ENCODE measurements at regions of chr3 and their contacts with region 1.

Region 1: GRCh38 chr3:119604878-119605277 is 7.2 kb downstream of the PLA1A start:
- DNase-seq: no peak
- ATAC-seq: no peak
- H3K4me3 ChIP-seq: no peak overlapping the region
- H3K27ac ChIP-seq: no peak overlapping the region
- H3K4me1 ChIP-seq: no peaks in the 10 kb centered on the region
- H3K27me3 ChIP-seq: peaks cover 8% of the 10 kb centered on the region
- CTCF ChIP-seq: no peak

Region 2: GRCh38 chr3:119624002-119624720 is 19.3 kb after region 1 on chr3:
- CTCF ChIA-PET with region 1: no interaction called
- POLR2A ChIA-PET with region 1: interaction called, 19 read pairs
- in situ Hi-C with region 1: no loop called
- intact Hi-C with region 1: no loop called
- DNase-seq: no peak
- ATAC-seq: no peak
- H3K4me3 ChIP-seq: no peak overlapping the region
- H3K27ac ChIP-seq: no peak overlapping the region
- H3K4me1 ChIP-seq: no peaks in the 10 kb centered on the region
- H3K27me3 ChIP-seq: no peaks in the 10 kb centered on the region; the same call in 1 of the 2 replicates
- CTCF ChIP-seq: no peak